Psoas muscle (tissue), 8 donors: ENCODE measurements at regions of chr2 and their contacts with region 1.

Region 1: DNA sequence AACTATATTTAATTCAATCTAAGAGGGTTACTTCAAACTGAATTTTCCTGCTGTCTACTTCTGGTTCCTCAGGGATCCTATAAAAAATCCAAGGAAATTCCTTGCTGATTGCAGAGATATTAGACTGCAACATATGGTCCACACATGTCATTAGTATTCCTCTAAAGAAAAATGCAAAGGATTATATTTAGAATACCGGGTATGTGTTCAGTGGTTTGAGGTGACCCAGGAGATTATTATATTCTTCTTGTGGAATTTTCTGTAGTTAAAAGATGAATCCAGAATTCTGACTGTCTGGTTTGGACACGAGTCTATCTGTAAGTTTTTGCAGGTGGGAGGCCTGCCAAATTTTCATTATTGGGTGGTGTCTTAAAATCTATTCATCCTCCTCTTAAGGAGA is 18.2 kb downstream of the HOXD1 start:
- DNase-seq: no peak
- ATAC-seq: no peak
- H3K4me3 ChIP-seq: no peak overlapping the region
- H3K27ac ChIP-seq: no peak overlapping the region
- H3K4me1 ChIP-seq: no peaks in the 10 kb centered on the region
- H3K27me3 ChIP-seq: no peaks in the 10 kb centered on the region
- CTCF ChIP-seq: no peak

Region 2: DNA sequence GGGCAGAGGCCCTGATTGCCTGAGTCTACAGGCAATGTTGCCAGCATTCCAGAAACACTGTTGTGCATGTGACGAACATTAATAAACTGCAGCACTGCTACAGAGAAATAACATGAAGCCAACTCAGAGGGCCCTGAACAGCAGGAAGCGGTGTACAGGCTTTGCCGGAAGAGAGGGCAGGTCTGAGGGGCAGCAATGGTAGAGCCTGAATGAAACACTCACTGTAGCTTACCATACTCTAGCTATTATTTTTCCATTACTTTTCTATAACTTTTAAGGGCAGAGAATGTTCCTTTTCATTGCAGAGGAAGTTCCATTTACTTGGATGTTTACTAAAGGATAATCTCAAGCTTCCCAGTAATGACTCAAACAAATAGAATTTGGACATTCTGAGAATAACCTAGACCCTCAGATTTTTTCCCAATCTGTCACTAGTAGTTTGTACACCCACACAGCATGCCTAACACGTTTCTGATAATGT is 212.9 kb after region 1 on chr2:
- intact Hi-C with region 1: loop called in 1 of 2 experiments (anchors 10 kb)
- DNase-seq: no peak
- ATAC-seq: no peak
- H3K4me3 ChIP-seq: no peak overlapping the region
- H3K27ac ChIP-seq: no peak overlapping the region
- H3K4me1 ChIP-seq: no peaks in the 10 kb centered on the region
- H3K27me3 ChIP-seq: no peaks in the 10 kb centered on the region
- CTCF ChIP-seq: no peak